ENCODE measurements at regions of chr7 and their contacts with region 1.

Region 1: GRCh38 chr7:92880212-92881090 is 44.1 kb upstream of the CDK6 start:
- DNase-seq: peak; percentile 18
- H3K4me3 ChIP-seq: no peak overlapping the region
- H3K27ac ChIP-seq: no peak overlapping the region
- H3K4me1 ChIP-seq: peaks cover 9% of the 10 kb centered on the region
- H3K27me3 ChIP-seq: no peaks in the 10 kb centered on the region
- CTCF ChIP-seq: peak in 1 of 2 donors; percentile 14

Region 2: GRCh38 chr7:92621026-92621540 is 259.4 kb before region 1 on chr7:
- CTCF ChIA-PET with region 1: no interaction called
- dilution Hi-C with region 1: no loop called
- in situ Hi-C with region 1: no loop called
- intact Hi-C with region 1: loop called (anchors 1 kb)
- DNase-seq: peak; percentile 78
- H3K4me3 ChIP-seq: no peak overlapping the region
- H3K27ac ChIP-seq: peak overlapping the region; percentile 54
- H3K4me1 ChIP-seq: peaks cover 36% of the 10 kb centered on the region
- H3K27me3 ChIP-seq: no peaks in the 10 kb centered on the region
- CTCF ChIP-seq: peak; percentile 67 to 72

Region 3: GRCh38 chr7:92843034-92843760 is 37.3 kb before region 1 on chr7:
- CTCF ChIA-PET with region 1: no interaction called
- dilution Hi-C with region 1: loop called (anchors 5 kb)
- in situ Hi-C with region 1: no loop called
- intact Hi-C with region 1: no loop called
- DNase-seq: no peak
- H3K4me3 ChIP-seq: no peak overlapping the region
- H3K27ac ChIP-seq: no peak overlapping the region
- H3K4me1 ChIP-seq: peaks cover 12% of the 10 kb centered on the region
- H3K27me3 ChIP-seq: no peaks in the 10 kb centered on the region
- CTCF ChIP-seq: no peak